ENCODE measurements at regions of chr9 and their contacts with region 1.

Region 1: DNA sequence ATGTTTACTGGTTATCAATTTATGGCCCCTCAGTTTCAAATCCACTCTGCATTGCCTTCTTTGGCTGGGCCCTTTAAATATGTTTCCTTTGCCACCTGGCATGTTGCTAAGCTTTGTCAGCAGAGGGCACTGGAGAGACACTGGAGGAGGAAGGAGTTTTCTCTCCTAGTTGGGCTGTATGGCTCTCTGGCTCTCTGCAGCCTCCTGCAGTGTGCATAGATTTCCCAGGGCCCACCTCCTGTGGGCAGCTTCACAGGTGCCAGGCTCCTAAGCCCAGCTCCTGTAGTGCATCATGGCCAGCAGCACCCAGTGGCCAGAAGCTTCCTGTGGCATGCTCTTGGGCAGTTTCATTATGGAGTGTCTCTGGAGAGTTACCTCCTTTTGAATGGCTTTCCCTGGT is 23.3 kb downstream of the CAVIN4 start:
- DNase-seq: no peak
- H3K4me3 ChIP-seq: no peak overlapping the region
- H3K27ac ChIP-seq: no peak overlapping the region
- H3K4me1 ChIP-seq: peaks cover 15% of the 10 kb centered on the region
- H3K27me3 ChIP-seq: no peaks in the 10 kb centered on the region
- CTCF ChIP-seq: peak; percentile 58

Region 2: GRCh38 chr9:101311758-101312420 is 710.7 kb after region 1 on chr9:
- intact Hi-C with region 1: loop called (anchors 5 kb)
- DNase-seq: no peak
- H3K4me3 ChIP-seq: no peak overlapping the region
- H3K27ac ChIP-seq: no peak overlapping the region
- H3K4me1 ChIP-seq: no peaks in the 10 kb centered on the region
- H3K27me3 ChIP-seq: peaks cover 13% of the 10 kb centered on the region
- CTCF ChIP-seq: peak; percentile 76